ENCODE measurements at regions of chr10 and their contacts with region 1.

Region 1: DNA sequence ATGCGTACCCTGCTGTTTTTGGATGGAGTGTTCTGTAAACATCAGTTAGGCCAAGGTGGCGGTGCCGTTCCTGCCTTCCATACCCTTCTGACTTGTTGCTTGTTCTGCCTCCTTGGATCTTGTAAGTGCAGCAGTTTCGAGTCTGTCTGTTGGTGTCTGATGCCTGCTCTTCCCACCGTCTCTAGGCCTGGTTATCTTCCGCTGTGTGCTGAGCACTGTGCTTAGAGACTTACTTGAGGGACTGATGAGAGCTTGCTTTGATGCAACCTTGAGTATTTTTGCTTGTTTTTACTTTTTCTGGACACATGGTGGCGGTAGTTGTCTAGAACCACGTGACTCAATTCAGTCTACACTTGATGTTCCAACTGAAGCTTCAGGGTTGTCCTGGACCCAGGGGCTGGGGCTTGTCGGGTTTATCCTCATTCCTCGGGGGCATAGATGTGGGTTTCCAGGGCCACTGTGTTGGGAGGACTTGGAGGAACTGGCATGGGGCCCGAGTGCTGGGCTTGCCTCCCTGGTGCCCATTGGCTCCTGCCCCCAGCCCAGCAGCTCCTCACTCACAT is 14.4 kb upstream of the SPRN start:
- DNase-seq: no peak
- ATAC-seq: no peak

Region 2: DNA sequence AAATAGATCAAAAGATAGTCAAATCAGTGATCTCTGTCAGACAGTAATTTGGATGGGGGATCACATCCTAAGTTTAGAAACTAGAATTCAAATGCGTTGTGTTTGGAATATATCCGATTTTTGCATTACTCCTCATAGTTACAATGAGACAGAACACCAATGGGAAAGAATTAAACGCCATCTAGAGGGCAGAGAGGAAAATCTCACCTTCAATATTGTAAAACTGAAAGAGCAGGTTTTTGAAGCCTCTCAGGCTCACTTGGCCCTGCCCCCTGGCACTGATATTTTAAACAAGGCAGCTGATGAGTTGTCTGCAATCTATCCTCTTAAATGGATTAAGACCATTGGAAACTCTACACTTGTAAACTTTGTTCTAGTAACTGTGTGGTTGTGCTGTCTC is 170.1 kb after region 1 on chr10:
- intact Hi-C with region 1: loop called (anchors 5 kb)
- DNase-seq: no peak
- ATAC-seq: no peak